CD8-positive, alpha-beta T cell (primary cell): ENCODE measurements at regions of chr4 and their contacts with region 1.

Region 1: DNA sequence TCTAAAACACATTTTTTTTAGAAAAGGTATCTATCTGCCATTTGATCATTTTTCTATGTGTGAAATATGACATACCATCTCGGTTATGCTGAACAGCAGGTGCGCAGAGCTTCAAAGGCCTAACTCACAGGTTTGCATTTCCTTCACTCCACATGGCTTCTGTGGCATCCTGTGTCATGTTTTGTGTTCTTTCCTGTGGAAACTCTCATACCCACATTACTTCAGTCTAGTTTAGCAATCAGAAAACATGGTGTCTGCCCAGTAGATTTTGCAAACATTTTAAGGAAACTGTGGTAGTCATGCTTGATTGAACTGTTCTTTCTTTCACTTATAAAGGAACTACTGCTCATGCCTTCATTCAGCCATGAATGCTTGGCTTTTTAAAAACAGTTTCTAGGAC is 11.3 kb upstream of the ARAP2 start:
- DNase-seq: peak; percentile 26 to 95 (median 63)
- ATAC-seq: peak; percentile 93
- H3K4me3 ChIP-seq: no peak overlapping the region
- H3K4me3 Mint-ChIP-seq: peak overlapping the region; percentile 76
- H3K27ac ChIP-seq: peak overlapping the region; percentile 7 to 62
- H3K27ac Mint-ChIP-seq: peak overlapping the region; percentile 89
- H3K4me1 ChIP-seq: peaks cover 35% of the 10 kb centered on the region
- H3K4me1 Mint-ChIP-seq: peaks cover 51% of the 10 kb centered on the region
- H3K27me3 ChIP-seq: no peaks in the 10 kb centered on the region
- H3K27me3 Mint-ChIP-seq: no peaks in the 10 kb centered on the region
- CTCF ChIP-seq: no peak

Region 2: GRCh38 chr4:35538807-35539206 is 716.8 kb before region 1 on chr4:
- CTCF ChIA-PET with region 1: no interaction called
- POLR2A ChIA-PET with region 1: no interaction called
- intact Hi-C with region 1: no loop called
- DNase-seq: no peak
- ATAC-seq: no peak
- H3K4me3 ChIP-seq: no peak overlapping the region
- H3K4me3 Mint-ChIP-seq: no peak overlapping the region
- H3K27ac ChIP-seq: no peak overlapping the region
- H3K27ac Mint-ChIP-seq: no peak overlapping the region
- H3K4me1 ChIP-seq: no peaks in the 10 kb centered on the region
- H3K4me1 Mint-ChIP-seq: no peaks in the 10 kb centered on the region
- H3K27me3 ChIP-seq: no peaks in the 10 kb centered on the region
- H3K27me3 Mint-ChIP-seq: no peaks in the 10 kb centered on the region
- CTCF ChIP-seq: no peak

Region 3: GRCh38 chr4:36269101-36269500 is 13.5 kb after region 1 on chr4:
- CTCF ChIA-PET with region 1: interaction called, 6 read pairs
- POLR2A ChIA-PET with region 1: interaction called, 3 read pairs
- intact Hi-C with region 1: loop called in 1 of 2 experiments (anchors 1 kb)
- DNase-seq: peak in 5 of 9 experiments; percentile 37 to 94 (median 73)
- ATAC-seq: peak; percentile 95
- H3K4me3 ChIP-seq: no peak overlapping the region
- H3K4me3 Mint-ChIP-seq: peak overlapping the region; percentile 4
- H3K27ac ChIP-seq: peak overlapping the region; percentile 16 to 78
- H3K27ac Mint-ChIP-seq: peak overlapping the region; percentile 79
- H3K4me1 ChIP-seq: peaks cover 18% of the 10 kb centered on the region
- H3K4me1 Mint-ChIP-seq: peaks cover 44% of the 10 kb centered on the region
- H3K27me3 ChIP-seq: no peaks in the 10 kb centered on the region
- H3K27me3 Mint-ChIP-seq: no peaks in the 10 kb centered on the region
- CTCF ChIP-seq: no peak

Region 4: GRCh38 chr4:36385951-36386571 is 130.5 kb after region 1 on chr4:
- CTCF ChIA-PET with region 1: no interaction called
- POLR2A ChIA-PET with region 1: interaction called, 3 read pairs
- intact Hi-C with region 1: loop called in 1 of 2 experiments (anchors 5 kb)
- DNase-seq: peak; percentile 10 to 89 (median 40)
- ATAC-seq: peak; percentile 98
- H3K4me3 ChIP-seq: no peak overlapping the region
- H3K4me3 Mint-ChIP-seq: peak overlapping the region; percentile 65
- H3K27ac ChIP-seq: peak overlapping the region; percentile 38 to 46
- H3K27ac Mint-ChIP-seq: peak overlapping the region; percentile 96
- H3K4me1 ChIP-seq: peaks cover 21% of the 10 kb centered on the region
- H3K4me1 Mint-ChIP-seq: peaks cover 32% of the 10 kb centered on the region
- H3K27me3 ChIP-seq: no peaks in the 10 kb centered on the region
- H3K27me3 Mint-ChIP-seq: no peaks in the 10 kb centered on the region
- CTCF ChIP-seq: no peak

Region 5: GRCh38 chr4:36445480-36445879 is 189.9 kb after region 1 on chr4:
- CTCF ChIA-PET with region 1: no interaction called
- POLR2A ChIA-PET with region 1: no interaction called
- intact Hi-C with region 1: no loop called
- DNase-seq: no peak
- ATAC-seq: no peak
- H3K4me3 ChIP-seq: no peak overlapping the region
- H3K4me3 Mint-ChIP-seq: no peak overlapping the region
- H3K27ac ChIP-seq: no peak overlapping the region
- H3K27ac Mint-ChIP-seq: no peak overlapping the region
- H3K4me1 ChIP-seq: no peaks in the 10 kb centered on the region
- H3K4me1 Mint-ChIP-seq: no peaks in the 10 kb centered on the region
- H3K27me3 ChIP-seq: no peaks in the 10 kb centered on the region
- H3K27me3 Mint-ChIP-seq: peaks cover 13% of the 10 kb centered on the region
- CTCF ChIP-seq: no peak